Transverse colon (tissue), 4 donors: ENCODE measurements at regions of chr22 and their contacts with region 1.

Region 1: GRCh38 chr22:46250035-46250782 is at the start of gene CDPF1:
- DNase-seq: peak; percentile 95
- H3K4me3 ChIP-seq: peak within 1 kb of the TSS; percentile 60 to 95 (median 78)
- H3K27ac ChIP-seq: peak within 1 kb of the TSS; percentile 92 to 95 (median 94)
- H3K4me1 ChIP-seq: peaks cover 0 to 23% (median 12%) of the 10 kb centered on the region in 4 donors
- H3K27me3 ChIP-seq: no peaks in the 10 kb centered on the region
- CTCF ChIP-seq: peak in 2 of 5 experiments; percentile 10 to 47
- EP300 ChIP-seq: no peak
- POLR2A ChIP-seq: peak; percentile 84
- total RNA-seq, gene CDPF1: 8.2 to 11.9 (median 9.0) TPM in 3 of 4 donors, not detected in the other

Region 2: DNA sequence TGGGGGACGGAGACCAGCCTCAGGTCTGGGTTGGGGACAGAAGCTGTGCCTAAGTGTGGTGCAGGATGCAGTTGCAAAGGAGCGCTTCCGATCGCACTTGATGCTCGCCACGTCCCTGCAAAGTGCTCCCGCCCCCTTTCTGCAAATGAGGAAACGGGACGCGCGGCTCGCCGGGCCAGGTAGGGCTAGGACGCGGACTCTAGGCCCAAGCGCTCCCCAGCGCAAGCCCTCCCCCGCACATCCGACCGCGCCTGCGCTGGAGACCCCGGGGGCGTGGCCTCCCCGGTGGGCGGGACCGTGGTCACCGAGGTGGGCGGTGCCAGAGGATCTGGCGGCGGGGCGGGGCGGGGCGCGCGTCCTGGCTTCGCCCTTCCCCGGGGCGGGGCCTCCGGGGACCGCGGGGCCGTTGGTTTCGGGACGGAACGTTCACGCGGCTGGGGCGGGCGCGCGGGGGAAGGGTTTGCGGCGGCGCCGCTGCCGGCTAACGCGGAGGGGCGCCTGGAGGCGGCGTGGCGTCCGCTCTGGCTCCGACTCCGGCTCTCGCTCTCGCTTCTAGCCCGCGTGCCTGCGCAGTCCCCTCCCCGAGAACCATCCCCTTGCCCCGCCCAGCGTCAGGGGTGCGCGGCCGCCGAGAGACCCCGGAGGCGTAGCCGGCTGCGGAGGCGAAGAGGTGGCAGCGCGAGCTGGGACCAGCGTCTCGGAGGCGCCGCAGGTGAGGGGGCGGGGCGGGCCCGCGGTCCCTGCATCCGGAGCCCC is 940.6 kb before region 1 on chr22 and contains the start of gene FAM118A:
- in situ Hi-C with region 1: no loop called
- intact Hi-C with region 1: loop called (anchors 10 kb)
- DNase-seq: peak; percentile 97
- H3K4me3 ChIP-seq: peak within 1 kb of the TSS; percentile 72 to 80 (median 76)
- H3K27ac ChIP-seq: peak within 1 kb of the TSS; percentile 85 to 92 (median 88)
- H3K4me1 ChIP-seq: peaks cover 11 to 41% (median 31%) of the 10 kb centered on the region in 4 donors
- H3K27me3 ChIP-seq: no peaks in the 10 kb centered on the region
- CTCF ChIP-seq: no peak
- EP300 ChIP-seq: no peak
- POLR2A ChIP-seq: peak; percentile 72
- total RNA-seq, gene FAM118A: 46.0 to 424 (median 210) TPM

Region 3: GRCh38 chr22:46013460-46014416 is 236.5 kb before region 1 on chr22:
- in situ Hi-C with region 1: no loop called
- intact Hi-C with region 1: no loop called
- DNase-seq: peak; percentile 96
- H3K4me3 ChIP-seq: peak overlapping the region; percentile 25 to 61 (median 52)
- H3K27ac ChIP-seq: peak overlapping the region; percentile 93 to 97 (median 94)
- H3K4me1 ChIP-seq: peaks cover 9 to 19% (median 15%) of the 10 kb centered on the region in 4 donors
- H3K27me3 ChIP-seq: no peaks in the 10 kb centered on the region
- CTCF ChIP-seq: peak; percentile 67 to 93 (median 76)
- EP300 ChIP-seq: no peak
- POLR2A ChIP-seq: peak; percentile 86